ENCODE measurements at regions of chr10 and their contacts with region 1.

Region 1: GRCh38 chr10:15300697-15301096 is 70.4 kb downstream of the FAM171A1 start:
- DNase-seq: no peak
- H3K4me3 ChIP-seq: no peak overlapping the region
- H3K27ac ChIP-seq: no peak overlapping the region
- H3K4me1 ChIP-seq: no peaks in the 10 kb centered on the region
- H3K27me3 ChIP-seq: no peaks in the 10 kb centered on the region
- CTCF ChIP-seq: no peak

Region 2: GRCh38 chr10:15262036-15262713 is 38.5 kb before region 1 on chr10:
- CTCF ChIA-PET with region 1: no interaction called
- dilution Hi-C with region 1: loop called (anchors 5 kb)
- in situ Hi-C with region 1: no loop called
- intact Hi-C with region 1: no loop called
- DNase-seq: no peak
- H3K4me3 ChIP-seq: no peak overlapping the region
- H3K27ac ChIP-seq: no peak overlapping the region
- H3K4me1 ChIP-seq: no peaks in the 10 kb centered on the region
- H3K27me3 ChIP-seq: no peaks in the 10 kb centered on the region
- CTCF ChIP-seq: peak; percentile 5 to 32